A673 (cell line): ENCODE measurements at regions of chrX and their contacts with region 1.

Region 1: DNA sequence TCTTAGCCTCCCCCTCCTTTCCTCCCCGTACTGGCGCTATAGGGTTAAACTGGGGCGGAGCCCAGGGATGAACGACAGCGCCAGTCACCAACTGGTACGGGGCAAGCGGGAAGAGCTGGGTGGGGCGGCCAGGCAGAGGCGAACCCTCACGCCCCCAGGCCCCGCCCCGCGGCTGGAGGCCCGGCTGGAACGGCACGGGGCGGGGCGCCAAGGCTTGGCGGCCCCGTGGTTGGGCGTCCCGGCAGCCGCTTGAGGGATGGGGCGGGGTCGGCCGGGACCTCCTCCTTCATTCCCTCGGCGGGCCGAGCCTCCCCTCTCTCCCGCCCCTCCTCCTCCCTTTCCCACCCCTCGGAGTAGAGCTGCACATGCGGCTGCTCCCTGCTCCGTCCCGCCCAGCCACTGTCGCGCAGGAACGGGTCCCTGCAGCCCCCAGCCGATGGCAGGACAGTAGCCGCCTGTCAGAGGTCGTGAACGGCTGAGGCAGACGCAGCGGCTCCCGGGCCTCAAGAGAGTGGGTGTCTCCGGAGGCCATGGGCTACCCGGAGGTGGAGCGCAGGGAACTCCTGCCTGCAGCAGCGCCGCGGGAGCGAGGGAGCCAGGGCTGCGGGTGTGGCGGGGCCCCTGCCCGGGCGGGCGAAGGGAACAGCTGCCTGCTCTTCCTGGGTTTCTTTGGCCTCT is at the start of gene EDA:
- DNase-seq: peak; percentile 94
- H3K4me3 ChIP-seq: peak within 1 kb of the TSS; percentile 50
- H3K27ac ChIP-seq: no peak within 1 kb of the TSS
- H3K4me1 ChIP-seq: no peaks in the 10 kb centered on the region
- H3K27me3 ChIP-seq: no peaks in the 10 kb centered on the region
- CTCF ChIP-seq: no peak
- total RNA-seq, gene EDA: 2.6 and 3.3 TPM in 2 replicates

Region 2: GRCh38 chrX:69298466-69299140 is 317.3 kb before region 1 on chrX:
- CTCF ChIA-PET with region 1: no interaction called
- POLR2A ChIA-PET with region 1: no interaction called
- intact Hi-C with region 1: no loop called
- DNase-seq: peak; percentile 67
- H3K4me3 ChIP-seq: no peak overlapping the region
- H3K27ac ChIP-seq: peak overlapping the region; percentile 65
- H3K4me1 ChIP-seq: peaks cover 48% of the 10 kb centered on the region
- H3K27me3 ChIP-seq: no peaks in the 10 kb centered on the region
- CTCF ChIP-seq: no peak

Region 3: DNA sequence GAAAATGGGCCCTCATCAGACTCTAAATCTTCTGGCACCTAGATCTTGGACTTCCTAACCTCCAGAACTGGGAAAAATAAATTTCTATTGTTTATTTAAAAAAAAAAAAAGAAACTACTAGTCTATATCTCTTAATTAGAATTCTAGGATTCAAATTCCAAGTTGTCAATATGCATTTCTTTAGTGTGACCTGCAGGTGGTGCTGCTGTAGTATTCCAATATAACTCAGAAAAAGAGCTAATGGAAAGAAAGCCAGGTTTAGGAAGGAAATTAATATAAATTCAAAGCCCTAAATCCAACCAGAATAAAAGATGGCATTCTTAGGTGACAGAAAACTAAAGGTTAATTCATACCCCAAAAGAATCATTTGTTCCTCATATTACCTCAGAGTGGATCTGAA is 191.8 kb before region 1 on chrX:
- CTCF ChIA-PET with region 1: interaction called, 5 read pairs
- POLR2A ChIA-PET with region 1: no interaction called
- intact Hi-C with region 1: loop called (anchors 2 kb)
- DNase-seq: peak; percentile 37
- H3K4me3 ChIP-seq: no peak overlapping the region
- H3K27ac ChIP-seq: no peak overlapping the region
- H3K4me1 ChIP-seq: no peaks in the 10 kb centered on the region
- H3K27me3 ChIP-seq: peaks cover 8% of the 10 kb centered on the region
- CTCF ChIP-seq: peak; percentile 61

Region 4: DNA sequence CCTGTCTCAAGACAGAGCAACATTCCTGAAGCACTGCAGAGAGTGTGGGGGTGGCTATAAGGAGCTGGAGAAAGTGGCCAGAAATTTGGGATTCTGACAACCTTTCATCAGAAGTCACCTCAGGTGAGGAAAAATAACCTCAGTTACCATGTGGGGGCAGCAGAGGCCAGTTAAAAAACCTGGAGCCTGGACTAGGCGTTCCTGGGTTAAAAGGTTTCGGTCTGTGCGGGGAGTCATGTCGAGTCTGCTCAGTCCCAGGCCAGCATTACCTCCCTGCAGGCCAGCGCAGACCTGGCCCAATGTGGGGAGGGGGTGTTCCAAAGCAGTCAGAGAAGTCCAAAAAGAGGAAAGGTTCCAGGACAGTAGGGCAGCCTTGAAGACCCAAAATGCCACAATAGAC is 122.7 kb before region 1 on chrX:
- CTCF ChIA-PET with region 1: no interaction called
- POLR2A ChIA-PET with region 1: no interaction called
- intact Hi-C with region 1: loop called (anchors 5 kb)
- DNase-seq: peak; percentile 30
- H3K4me3 ChIP-seq: no peak overlapping the region
- H3K27ac ChIP-seq: no peak overlapping the region
- H3K4me1 ChIP-seq: no peaks in the 10 kb centered on the region
- H3K27me3 ChIP-seq: peaks cover 4% of the 10 kb centered on the region
- CTCF ChIP-seq: peak; percentile 56

Region 5: DNA sequence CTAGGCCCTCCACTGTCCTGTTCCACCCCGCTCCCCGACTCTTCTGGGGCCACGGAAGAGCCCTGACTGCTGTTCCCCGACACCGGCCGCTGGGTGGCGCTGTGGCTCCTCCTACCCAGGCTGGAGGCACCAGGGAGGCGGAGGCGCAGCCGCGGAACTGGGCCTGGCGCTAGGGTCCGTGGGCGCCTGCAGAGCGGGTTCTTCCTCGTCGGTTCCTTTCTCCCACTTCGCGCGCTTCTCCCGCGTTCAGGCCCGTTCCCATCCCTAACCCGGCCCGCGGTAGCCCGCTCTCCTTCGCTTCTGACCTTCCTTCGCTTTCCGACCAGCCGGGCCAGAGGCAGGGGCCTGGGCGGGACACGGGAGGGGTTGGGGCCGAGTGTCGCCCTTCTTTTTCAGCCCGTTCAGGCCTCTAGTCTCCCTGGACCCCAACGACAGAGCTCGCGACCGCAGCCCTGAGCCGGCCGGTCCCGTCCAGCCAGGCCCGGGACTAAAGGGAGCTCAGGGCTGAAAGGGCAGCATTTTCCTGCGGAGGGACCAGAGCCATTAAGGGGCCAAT is 77.5 kb before region 1 on chrX:
- CTCF ChIA-PET with region 1: no interaction called
- POLR2A ChIA-PET with region 1: no interaction called
- intact Hi-C with region 1: loop called (anchors 2 kb)
- DNase-seq: peak; percentile 68
- H3K4me3 ChIP-seq: peak overlapping the region; percentile 28
- H3K27ac ChIP-seq: no peak overlapping the region
- H3K4me1 ChIP-seq: no peaks in the 10 kb centered on the region
- H3K27me3 ChIP-seq: no peaks in the 10 kb centered on the region
- CTCF ChIP-seq: peak; percentile 84

Region 6: DNA sequence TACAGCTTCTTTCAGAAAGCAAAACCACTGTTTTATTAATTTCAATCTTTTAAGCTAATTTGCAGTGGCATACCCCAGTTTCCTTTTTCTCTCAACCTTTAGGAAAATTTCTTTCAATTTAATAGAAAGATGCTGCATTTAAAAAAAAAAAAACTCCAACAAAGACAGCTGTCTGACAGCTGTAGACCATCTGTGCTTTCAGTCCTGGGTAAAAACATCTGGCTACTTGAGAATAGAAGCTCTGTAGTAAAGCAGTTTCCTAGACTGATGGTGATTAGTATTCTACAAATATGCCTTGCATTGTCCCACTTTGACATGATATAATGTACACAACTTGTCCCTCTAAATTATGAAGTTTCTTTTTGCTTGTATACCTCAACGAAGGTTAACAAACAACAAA is 197.8 kb after region 1 on chrX:
- CTCF ChIA-PET with region 1: no interaction called
- POLR2A ChIA-PET with region 1: no interaction called
- intact Hi-C with region 1: no loop called
- DNase-seq: no peak
- H3K4me3 ChIP-seq: no peak overlapping the region
- H3K27ac ChIP-seq: no peak overlapping the region
- H3K4me1 ChIP-seq: no peaks in the 10 kb centered on the region
- H3K27me3 ChIP-seq: no peaks in the 10 kb centered on the region
- CTCF ChIP-seq: no peak